Activated T-helper 2 cell treated with anti-CD3 and anti-CD28 coated beads, Interferon-gamma antibody, Interleukin-2, Interleukin-4, amounts not matched to agents 10 μg/mL and 5 μg/mL and 100 μg/mL, durations not matched to agents 14 hours and 24 hours and 36 hours (primary cell): ENCODE measurements at regions of chr21 and their contacts with region 1.

Region 1: GRCh38 chr21:14581902-14582457 is 35.9 kb upstream of the SAMSN1 start:
- DNase-seq: peak; percentile 40
- H3K4me3 Mint-ChIP-seq: peak overlapping the region; percentile 35
- H3K27ac Mint-ChIP-seq: peak overlapping the region; percentile 70
- H3K4me1 Mint-ChIP-seq: peaks cover 50% of the 10 kb centered on the region
- H3K27me3 Mint-ChIP-seq: no peaks in the 10 kb centered on the region

Region 2: DNA sequence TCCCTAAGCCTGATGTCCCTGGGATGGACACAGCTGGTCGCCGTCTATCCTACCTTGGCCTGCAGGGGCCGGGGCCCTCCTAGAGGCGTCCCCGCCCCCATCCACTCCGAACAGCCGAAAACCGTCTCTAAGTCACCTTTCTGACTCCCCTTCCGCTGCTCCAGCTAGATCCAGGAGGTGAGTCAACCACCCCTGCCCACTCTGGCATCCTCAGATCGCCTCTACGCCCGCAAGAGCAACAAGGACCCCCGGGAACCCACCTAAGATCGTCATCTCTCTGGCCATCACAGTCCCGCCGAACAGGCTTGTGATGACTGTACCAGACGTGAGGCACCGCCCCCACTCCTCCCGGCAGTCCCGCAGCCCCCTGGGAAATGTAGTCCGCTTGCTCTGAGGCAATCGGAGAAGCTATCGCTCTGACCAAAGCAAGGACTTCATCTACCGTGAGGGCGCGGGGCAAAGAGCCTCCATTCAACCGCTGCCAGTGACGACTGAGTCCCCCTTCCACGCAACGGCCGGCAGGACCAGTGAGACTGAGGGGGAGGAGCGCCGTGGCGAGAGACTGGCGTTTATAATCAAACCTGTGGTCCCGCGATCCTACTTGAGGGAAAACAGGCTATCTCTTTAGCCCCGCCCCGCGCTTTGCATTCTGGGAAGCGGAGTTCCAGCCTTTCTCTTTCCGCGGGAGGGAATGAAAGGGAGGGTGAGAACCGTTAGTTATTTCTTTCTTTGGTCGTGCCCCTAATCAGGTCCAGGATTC is 199.0 kb before region 1 on chr21 and contains the start of gene HSPA13:
- intact Hi-C with region 1: loop called (anchors 5 kb)
- DNase-seq: peak; percentile 99
- H3K4me3 Mint-ChIP-seq: peak within 1 kb of the TSS; percentile 98
- H3K27ac Mint-ChIP-seq: peak within 1 kb of the TSS; percentile 98
- H3K4me1 Mint-ChIP-seq: peaks cover 34% of the 10 kb centered on the region
- H3K27me3 Mint-ChIP-seq: peaks cover 3% of the 10 kb centered on the region
- total RNA-seq, gene HSPA13: 40.6 and 47.6 TPM in 2 replicates

Region 3: GRCh38 chr21:14454016-14455009 is 127.7 kb before region 1 on chr21:
- intact Hi-C with region 1: loop called (anchors 5 kb)
- DNase-seq: no peak
- H3K4me3 Mint-ChIP-seq: no peak overlapping the region
- H3K27ac Mint-ChIP-seq: peak overlapping the region; percentile 67
- H3K4me1 Mint-ChIP-seq: peaks cover 52% of the 10 kb centered on the region
- H3K27me3 Mint-ChIP-seq: no peaks in the 10 kb centered on the region

Region 4: GRCh38 chr21:14523234-14523633 is 58.7 kb before region 1 on chr21:
- intact Hi-C with region 1: loop called (anchors 2 kb)
- DNase-seq: no peak
- H3K4me3 Mint-ChIP-seq: peak overlapping the region; percentile 71
- H3K27ac Mint-ChIP-seq: peak overlapping the region; percentile 91
- H3K4me1 Mint-ChIP-seq: peaks cover 52% of the 10 kb centered on the region
- H3K27me3 Mint-ChIP-seq: no peaks in the 10 kb centered on the region

Region 5: GRCh38 chr21:14675774-14676530 is 94.0 kb after region 1 on chr21:
- intact Hi-C with region 1: loop called (anchors 5 kb)
- DNase-seq: no peak
- H3K4me3 Mint-ChIP-seq: peak overlapping the region; percentile 52
- H3K27ac Mint-ChIP-seq: peak overlapping the region; percentile 97
- H3K4me1 Mint-ChIP-seq: peaks cover 47% of the 10 kb centered on the region
- H3K27me3 Mint-ChIP-seq: no peaks in the 10 kb centered on the region